WTC11 (cell line): ENCODE measurements at regions of chr10 and their contacts with region 1.

Region 1: DNA sequence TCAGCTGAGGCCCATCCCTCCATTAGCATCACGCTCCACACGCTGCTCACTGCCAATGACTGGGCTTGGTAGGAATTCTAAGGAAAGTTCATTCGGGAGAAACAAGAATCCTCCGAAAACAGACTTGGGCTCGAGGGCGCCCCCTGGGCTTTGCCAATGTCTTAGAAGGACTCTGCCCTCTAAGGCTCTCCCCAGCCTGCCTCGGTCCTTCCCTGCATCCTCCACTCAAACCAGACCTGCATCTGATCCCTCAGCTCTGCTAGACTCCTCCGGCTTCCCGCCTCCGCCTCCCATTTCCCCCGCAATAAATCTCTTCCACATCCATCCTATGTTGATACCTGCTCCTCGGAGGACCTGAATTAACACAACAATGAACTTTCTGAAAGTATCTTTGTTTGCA is 177.6 kb downstream of the PLPP4 start:
- DNase-seq: peak; percentile 85
- ATAC-seq: peak; percentile 95
- H3K4me3 Mint-ChIP-seq: no peak overlapping the region
- H3K27ac Mint-ChIP-seq: no peak overlapping the region
- H3K4me1 Mint-ChIP-seq: peaks cover 38% of the 10 kb centered on the region
- H3K27me3 Mint-ChIP-seq: peaks cover 25% of the 10 kb centered on the region
- CTCF ChIP-seq: peak; percentile 48; the same call in 1 of the 2 replicates

Region 2: GRCh38 chr10:120600871-120601649 is 33.6 kb before region 1 on chr10:
- CTCF ChIA-PET with region 1: interaction called, 18 read pairs
- POLR2A ChIA-PET with region 1: no interaction called
- DNase-seq: peak; percentile 67
- ATAC-seq: peak; percentile 78
- H3K4me3 Mint-ChIP-seq: no peak overlapping the region
- H3K27ac Mint-ChIP-seq: no peak overlapping the region
- H3K4me1 Mint-ChIP-seq: peaks cover 26% of the 10 kb centered on the region
- H3K27me3 Mint-ChIP-seq: peaks cover 7% of the 10 kb centered on the region
- CTCF ChIP-seq: no peak

Region 3: GRCh38 chr10:120646738-120647456 is 12.3 kb after region 1 on chr10:
- CTCF ChIA-PET with region 1: interaction called, 37 read pairs
- POLR2A ChIA-PET with region 1: interaction called, 3 read pairs
- DNase-seq: no peak
- ATAC-seq: peak; percentile 58; the same call in 1 of the 2 replicates
- H3K4me3 Mint-ChIP-seq: no peak overlapping the region
- H3K27ac Mint-ChIP-seq: no peak overlapping the region
- H3K4me1 Mint-ChIP-seq: peaks cover 36% of the 10 kb centered on the region
- H3K27me3 Mint-ChIP-seq: peaks cover 67% of the 10 kb centered on the region
- CTCF ChIP-seq: no peak